GM18951 (cell line): ENCODE measurements at regions of chr3 and their contacts with region 1.

Region 1: GRCh38 chr3:196932600-196932999 is 9.7 kb downstream of the NCBP2 start:
- POLR2A ChIP-seq: no peak

Region 2: GRCh38 chr3:196842567-196843434 is 89.8 kb before region 1 on chr3:
- in situ Hi-C with region 1: loop called (anchors 10 kb)
- POLR2A ChIP-seq: no peak

Region 3: DNA sequence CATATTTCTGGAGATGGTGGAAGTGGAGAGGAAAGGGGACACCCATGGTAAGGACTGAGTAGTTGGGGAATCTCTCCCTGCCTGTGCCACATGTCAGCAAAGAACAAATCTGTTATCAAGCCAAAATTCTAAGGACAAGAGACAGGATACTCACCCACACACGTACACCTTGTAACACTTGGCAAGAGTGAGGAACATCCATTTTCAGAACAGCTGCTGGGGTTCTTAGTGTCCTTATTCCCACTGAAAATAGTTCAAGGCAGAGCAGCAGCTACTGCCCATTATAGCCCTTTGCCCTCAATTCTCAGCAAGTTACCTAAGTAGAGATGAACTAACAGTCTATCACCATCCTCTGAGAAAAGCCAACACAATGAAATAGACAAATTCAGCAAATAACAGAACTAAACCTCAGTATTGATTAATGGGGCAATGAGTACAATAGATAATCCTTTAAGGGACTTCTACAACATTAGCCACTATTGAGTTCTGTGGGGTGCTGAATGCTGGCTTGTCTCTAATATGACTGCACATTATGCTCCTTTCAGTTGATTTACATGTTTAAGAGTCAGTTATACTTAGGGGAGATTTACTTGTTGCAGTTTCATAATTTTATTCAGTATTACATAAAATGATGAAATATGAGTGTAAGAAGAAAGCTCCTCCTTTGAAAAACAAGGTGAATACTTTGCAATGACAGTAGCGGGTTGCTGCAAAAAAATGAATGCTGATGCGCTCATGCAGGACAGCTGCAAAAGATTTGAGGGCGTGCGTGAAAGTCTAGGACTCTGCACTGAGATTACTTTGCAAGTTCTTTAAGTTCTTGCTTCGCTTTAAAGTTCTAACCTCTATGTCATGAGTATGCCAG is 42.5 kb before region 1 on chr3:
- in situ Hi-C with region 1: no loop called
- POLR2A ChIP-seq: no peak